ENCODE measurements at regions of chr12 and their contacts with region 1.

Region 1: GRCh38 chr12:93742110-93742934 is 65.1 kb downstream of the CRADD start:
- DNase-seq: peak; percentile 86 to 96 (median 90)
- ATAC-seq: peak; percentile 88
- H3K4me3 ChIP-seq: peak overlapping the region; percentile 44
- H3K27ac ChIP-seq: peak overlapping the region; percentile 91
- H3K4me1 ChIP-seq: peaks cover 11 to 56% of the 10 kb centered on the region in 2 experiments
- H3K27me3 ChIP-seq: no peaks in the 10 kb centered on the region
- CTCF ChIP-seq: peak; percentile 55 to 82 (median 65); a peak in 5 of 6 replicates
- EP300 ChIP-seq: peak; percentile 95
- POLR2A ChIP-seq: peak; percentile 29; the same call in 1 of the 2 replicates
- RAD21 ChIP-seq: peak; percentile 51 to 88

Region 2: DNA sequence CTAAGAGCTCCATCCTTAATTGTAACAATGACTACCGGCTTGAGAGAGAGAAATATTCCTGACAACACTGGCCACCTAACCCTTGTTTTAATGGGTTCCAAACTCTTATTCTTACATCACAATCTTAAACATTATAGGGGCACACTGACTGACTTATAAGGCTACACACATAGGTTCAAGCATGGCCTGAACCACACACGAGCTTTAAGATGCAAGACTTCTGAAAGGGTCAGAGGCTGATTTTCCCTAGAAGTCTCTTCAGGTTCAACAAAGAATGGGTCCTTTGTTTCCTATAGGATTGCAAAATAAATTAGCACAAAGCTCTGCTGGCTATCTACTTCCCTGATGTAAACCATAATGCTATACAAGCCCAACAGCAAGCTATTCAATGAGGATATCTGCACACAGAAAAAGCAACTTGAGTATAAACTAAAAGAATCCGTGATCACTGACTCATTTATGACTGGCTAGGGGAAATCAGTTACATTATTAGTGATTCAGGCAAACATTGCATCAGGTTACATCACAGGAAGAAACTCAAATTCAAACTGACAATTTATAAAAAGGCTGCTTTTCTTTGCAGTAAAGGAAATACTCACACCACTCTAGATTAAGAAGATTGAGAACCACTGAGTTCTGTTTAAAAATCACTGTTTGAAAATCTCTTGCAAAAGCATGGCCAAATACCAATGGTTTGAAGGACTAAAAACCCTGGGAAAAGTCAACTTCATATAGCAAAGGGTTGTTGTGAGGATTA is 1605.2 kb before region 1 on chr12:
- CTCF ChIA-PET with region 1: no interaction called
- POLR2A ChIA-PET with region 1: no interaction called
- in situ Hi-C with region 1: no loop called
- intact Hi-C with region 1: no loop called
- DNase-seq: no peak
- ATAC-seq: no peak
- H3K4me3 ChIP-seq: no peak overlapping the region
- H3K27ac ChIP-seq: no peak overlapping the region
- H3K4me1 ChIP-seq: peaks cover 0 to 44% of the 10 kb centered on the region in 2 experiments; a peak in 4 of 5 replicates
- H3K27me3 ChIP-seq: no peaks in the 10 kb centered on the region
- CTCF ChIP-seq: no peak
- EP300 ChIP-seq: peak; percentile 59; the same call in 1 of the 2 replicates
- POLR2A ChIP-seq: no peak
- RAD21 ChIP-seq: no peak

Region 3: GRCh38 chr12:93502802-93503623 is 239.3 kb before region 1 on chr12:
- CTCF ChIA-PET with region 1: interaction called, 3 read pairs
- POLR2A ChIA-PET with region 1: no interaction called
- in situ Hi-C with region 1: no loop called
- intact Hi-C with region 1: loop called (anchors 2 kb)
- DNase-seq: peak in 2 of 4 experiments; percentile 20 to 64
- ATAC-seq: peak; percentile 76
- H3K4me3 ChIP-seq: no peak overlapping the region
- H3K27ac ChIP-seq: no peak overlapping the region
- H3K4me1 ChIP-seq: no peaks in the 10 kb centered on the region
- H3K27me3 ChIP-seq: no peaks in the 10 kb centered on the region
- CTCF ChIP-seq: peak; percentile 49 to 85 (median 71); a peak in 5 of 6 replicates
- EP300 ChIP-seq: no peak
- POLR2A ChIP-seq: no peak
- RAD21 ChIP-seq: peak; percentile 90 to 92

Region 4: DNA sequence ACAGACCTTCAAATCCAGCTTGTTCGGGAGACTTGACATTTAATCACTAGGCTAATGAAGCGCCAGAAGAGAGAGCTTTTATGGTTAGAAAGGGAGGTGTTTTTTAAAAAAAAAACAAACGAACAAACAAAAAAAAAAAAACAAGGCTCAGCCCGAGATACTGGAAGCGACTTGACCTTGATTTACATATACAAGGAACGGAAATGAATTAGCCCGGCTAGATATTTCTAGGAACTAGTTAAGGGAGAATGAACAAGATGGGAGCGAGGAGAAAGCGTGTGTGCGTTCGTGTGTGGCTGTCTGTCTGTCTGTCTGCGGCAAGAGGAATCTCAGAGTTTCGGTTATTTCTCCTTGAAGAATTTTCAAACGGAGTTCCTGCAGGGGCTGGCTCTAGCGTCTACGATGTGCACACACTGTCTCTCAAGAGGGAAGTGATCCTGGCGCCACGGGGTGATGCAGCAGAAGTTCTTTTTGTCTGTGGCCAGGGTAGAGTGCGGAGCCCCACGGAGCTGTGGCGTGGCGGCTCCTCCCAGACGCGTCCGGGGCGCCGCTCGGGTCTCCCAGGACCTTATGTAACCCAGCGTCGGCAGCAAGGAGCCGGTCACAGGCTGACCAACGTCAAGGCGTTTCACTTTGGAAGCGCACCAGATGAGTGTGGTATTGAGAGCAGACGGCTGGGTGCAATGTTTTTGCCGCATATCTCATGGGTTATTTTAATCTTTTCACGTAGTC is 151.0 kb before region 1 on chr12:
- CTCF ChIA-PET with region 1: no interaction called
- POLR2A ChIA-PET with region 1: interaction called, 6 read pairs
- in situ Hi-C with region 1: no loop called
- intact Hi-C with region 1: loop called (anchors 1 kb)
- DNase-seq: peak; percentile 54 to 85 (median 68)
- ATAC-seq: peak; percentile 84
- H3K4me3 ChIP-seq: peak overlapping the region; percentile 49
- H3K27ac ChIP-seq: peak overlapping the region; percentile 85
- H3K4me1 ChIP-seq: peaks cover 4 to 14% of the 10 kb centered on the region in 2 experiments
- H3K27me3 ChIP-seq: no peaks in the 10 kb centered on the region
- CTCF ChIP-seq: no peak
- EP300 ChIP-seq: peak; percentile 53
- POLR2A ChIP-seq: peak; percentile 88
- RAD21 ChIP-seq: peak in 1 of 2 experiments; percentile 28; a peak in 1 of 4 replicates

Region 5: DNA sequence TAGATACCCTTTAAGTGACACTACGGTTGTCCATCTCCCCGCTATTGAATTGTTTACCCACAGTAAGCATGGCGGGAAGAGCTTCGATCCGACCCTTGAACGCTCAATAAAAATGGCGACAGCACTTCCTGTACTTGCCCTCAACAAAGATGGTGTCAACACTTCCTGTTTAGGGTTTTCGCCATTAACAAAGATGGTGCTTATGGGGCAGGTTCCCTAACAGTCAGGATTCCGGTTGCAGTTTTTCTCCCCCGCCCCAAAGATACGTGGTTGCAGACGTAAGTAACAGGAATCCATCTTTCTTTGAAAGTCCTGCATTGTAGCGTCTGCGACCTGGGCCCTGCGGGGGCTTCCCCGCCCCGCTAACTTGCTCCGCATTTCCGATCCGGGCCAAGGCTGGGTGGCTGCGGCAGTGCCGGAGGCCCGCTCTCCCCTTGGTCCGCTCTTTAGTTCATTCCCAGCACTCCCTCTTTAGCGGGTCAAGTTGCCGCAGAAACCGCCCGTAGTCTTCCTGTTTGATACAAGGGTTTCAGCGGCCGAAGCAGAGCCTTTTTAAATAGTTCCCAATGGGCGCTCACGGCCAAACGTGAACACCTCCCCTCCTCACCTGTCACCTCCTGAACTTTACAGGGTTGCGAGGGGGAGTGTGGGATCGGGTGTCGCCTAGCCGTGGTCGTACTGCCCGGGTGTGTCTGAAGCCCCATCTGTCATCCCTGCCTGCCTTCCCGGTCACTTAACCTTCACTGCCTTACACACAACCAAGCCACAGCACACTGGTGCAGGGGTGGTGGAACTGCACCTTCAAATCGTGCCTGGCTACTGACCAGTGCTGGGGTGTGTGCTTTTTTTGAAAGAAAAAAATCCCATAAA is 64.9 kb before region 1 on chr12 and contains the start of gene CRADD:
- CTCF ChIA-PET with region 1: no interaction called
- POLR2A ChIA-PET with region 1: interaction called, 5 read pairs
- in situ Hi-C with region 1: no loop called
- intact Hi-C with region 1: loop called (anchors 1 kb)
- DNase-seq: peak; percentile 76 to 96 (median 79)
- ATAC-seq: peak; percentile 85
- H3K4me3 ChIP-seq: peak within 1 kb of the TSS; percentile 60
- H3K27ac ChIP-seq: peak within 1 kb of the TSS; percentile 95
- H3K4me1 ChIP-seq: peaks cover 15 to 37% of the 10 kb centered on the region in 2 experiments; a peak in 4 of 5 replicates
- H3K27me3 ChIP-seq: no peaks in the 10 kb centered on the region
- CTCF ChIP-seq: no peak
- EP300 ChIP-seq: peak; percentile 30; the same call in 1 of the 2 replicates
- POLR2A ChIP-seq: peak; percentile 90
- RAD21 ChIP-seq: no peak; a peak in 1 of 4 replicates
- polyA plus RNA-seq, gene CRADD: 20.5 to 24.9 TPM

Region 6: DNA sequence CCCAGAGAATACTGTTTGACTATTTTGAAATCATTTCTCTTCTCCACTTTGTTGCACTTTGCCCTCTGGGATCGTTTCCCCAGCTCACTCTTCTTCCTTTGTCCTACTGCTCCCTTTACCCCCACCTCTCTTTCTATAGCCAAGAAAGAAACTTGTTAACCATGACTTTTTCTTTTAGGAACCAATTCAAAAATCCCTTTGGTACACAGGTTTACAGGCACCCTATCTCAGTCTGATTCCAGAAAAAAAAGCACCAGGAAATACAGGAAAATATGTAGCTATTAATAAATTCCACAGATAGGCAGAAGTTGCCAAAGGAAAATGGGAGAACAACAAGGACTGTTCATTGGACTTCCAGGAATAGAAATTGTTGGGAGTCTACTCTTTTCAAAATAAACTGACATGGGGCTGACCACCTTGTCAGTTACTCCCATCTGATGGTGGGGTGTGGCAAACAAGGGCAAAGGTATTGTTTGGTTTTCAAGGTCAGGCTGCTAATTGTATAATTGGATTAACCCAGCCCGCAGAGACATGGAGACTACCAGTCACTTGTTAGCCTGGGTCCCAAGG is 17.3 kb after region 1 on chr12:
- CTCF ChIA-PET with region 1: no interaction called
- POLR2A ChIA-PET with region 1: interaction called, 7 read pairs
- in situ Hi-C with region 1: no loop called
- intact Hi-C with region 1: loop called (anchors 1 kb)
- DNase-seq: peak in 1 of 4 experiments; percentile 35
- ATAC-seq: no peak
- H3K4me3 ChIP-seq: no peak overlapping the region
- H3K27ac ChIP-seq: peak overlapping the region; percentile 84
- H3K4me1 ChIP-seq: peaks cover 24 to 81% of the 10 kb centered on the region in 2 experiments
- H3K27me3 ChIP-seq: no peaks in the 10 kb centered on the region
- CTCF ChIP-seq: no peak
- EP300 ChIP-seq: no peak
- POLR2A ChIP-seq: no peak
- RAD21 ChIP-seq: no peak